CD14-positive monocyte (primary cell): ENCODE measurements at regions of chr7 and their contacts with region 1.

Region 1: GRCh38 chr7:65307651-65308299 is 65.9 kb upstream of the ZNF92 start:
- DNase-seq: peak in 1 of 3 donors; percentile 28
- H3K4me3 ChIP-seq: no peak overlapping the region
- H3K4me3 Mint-ChIP-seq: no peak overlapping the region
- H3K27ac ChIP-seq: no peak overlapping the region
- H3K27ac Mint-ChIP-seq: no peak overlapping the region
- H3K4me1 ChIP-seq: no peaks in the 10 kb centered on the region
- H3K4me1 Mint-ChIP-seq: no peaks in the 10 kb centered on the region
- H3K27me3 ChIP-seq: no peaks in the 10 kb centered on the region
- H3K27me3 Mint-ChIP-seq: peaks cover 3 to 4% (median 3%) of the 10 kb centered on the region in 3 donors
- CTCF ChIP-seq: peak; percentile 64

Region 2: GRCh38 chr7:64951250-64951848 is 356.4 kb before region 1 on chr7:
- intact Hi-C with region 1: loop called (anchors 2 to 5 kb)
- DNase-seq: peak; percentile 24 to 62 (median 40)
- H3K4me3 ChIP-seq: no peak overlapping the region
- H3K4me3 Mint-ChIP-seq: no peak overlapping the region
- H3K27ac ChIP-seq: no peak overlapping the region
- H3K27ac Mint-ChIP-seq: no peak overlapping the region
- H3K4me1 ChIP-seq: no peaks in the 10 kb centered on the region
- H3K4me1 Mint-ChIP-seq: peaks cover 3% of the 10 kb centered on the region
- H3K27me3 ChIP-seq: peaks cover 25 to 31% of the 10 kb centered on the region in 2 donors
- H3K27me3 Mint-ChIP-seq: peaks cover 29 to 44% (median 31%) of the 10 kb centered on the region in 3 donors
- CTCF ChIP-seq: peak; percentile 86

Region 3: GRCh38 chr7:65354263-65354662 is 46.5 kb after region 1 on chr7:
- intact Hi-C with region 1: no loop called
- DNase-seq: no peak
- H3K4me3 ChIP-seq: no peak overlapping the region
- H3K4me3 Mint-ChIP-seq: no peak overlapping the region
- H3K27ac ChIP-seq: no peak overlapping the region
- H3K27ac Mint-ChIP-seq: no peak overlapping the region
- H3K4me1 ChIP-seq: no peaks in the 10 kb centered on the region
- H3K4me1 Mint-ChIP-seq: no peaks in the 10 kb centered on the region
- H3K27me3 ChIP-seq: no peaks in the 10 kb centered on the region
- H3K27me3 Mint-ChIP-seq: peaks cover 4 to 10% (median 6%) of the 10 kb centered on the region in 3 donors
- CTCF ChIP-seq: no peak